ENCODE measurements at regions of chr13 and their contacts with region 1.

Region 1: GRCh38 chr13:29319451-29319850 is 276.0 kb downstream of the SLC7A1 start:
- DNase-seq: no peak
- ATAC-seq: no peak
- H3K4me3 ChIP-seq: no peak overlapping the region
- H3K27ac ChIP-seq: no peak overlapping the region
- H3K4me1 ChIP-seq: no peaks in the 10 kb centered on the region
- H3K27me3 ChIP-seq: no peaks in the 10 kb centered on the region; the same call in 1 of the 2 replicates
- CTCF ChIP-seq: no peak

Region 2: GRCh38 chr13:28967029-28967915 is 352.2 kb before region 1 on chr13:
- CTCF ChIA-PET with region 1: no interaction called
- POLR2A ChIA-PET with region 1: no interaction called
- in situ Hi-C with region 1: no loop called
- intact Hi-C with region 1: no loop called
- DNase-seq: no peak
- ATAC-seq: no peak
- H3K4me3 ChIP-seq: no peak overlapping the region
- H3K27ac ChIP-seq: no peak overlapping the region
- H3K4me1 ChIP-seq: no peaks in the 10 kb centered on the region
- H3K27me3 ChIP-seq: no peaks in the 10 kb centered on the region
- CTCF ChIP-seq: no peak

Region 3: DNA sequence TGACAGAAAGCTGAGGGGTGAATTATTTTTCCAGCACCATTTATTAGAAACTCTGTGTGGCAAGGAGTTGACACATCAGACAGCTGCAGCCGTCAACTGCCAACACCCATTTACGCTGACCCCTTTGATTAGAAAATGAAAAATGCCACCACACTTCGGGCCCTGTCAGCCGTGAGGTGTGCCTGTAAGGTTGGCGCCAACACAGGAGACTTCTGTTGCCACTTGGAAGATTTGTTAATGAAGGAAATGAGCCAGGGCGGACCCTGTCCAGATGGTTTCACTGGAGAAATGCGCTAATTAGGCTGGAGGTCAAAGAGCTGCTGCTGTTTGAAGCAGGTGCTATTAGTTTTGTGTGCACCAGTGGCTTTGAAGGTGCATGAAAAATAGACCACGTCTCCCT is 201.8 kb before region 1 on chr13:
- CTCF ChIA-PET with region 1: no interaction called
- POLR2A ChIA-PET with region 1: no interaction called
- in situ Hi-C with region 1: no loop called
- intact Hi-C with region 1: no loop called
- DNase-seq: no peak
- ATAC-seq: no peak
- H3K4me3 ChIP-seq: no peak overlapping the region
- H3K27ac ChIP-seq: no peak overlapping the region
- H3K4me1 ChIP-seq: no peaks in the 10 kb centered on the region
- H3K27me3 ChIP-seq: no peaks in the 10 kb centered on the region; the same call in 1 of the 2 replicates
- CTCF ChIP-seq: no peak

Region 4: GRCh38 chr13:29693275-29693961 is 374.0 kb after region 1 on chr13:
- CTCF ChIA-PET with region 1: interaction called, 11 read pairs
- POLR2A ChIA-PET with region 1: no interaction called
- in situ Hi-C with region 1: no loop called
- intact Hi-C with region 1: no loop called
- DNase-seq: no peak
- ATAC-seq: no peak
- H3K4me3 ChIP-seq: no peak overlapping the region
- H3K27ac ChIP-seq: no peak overlapping the region
- H3K4me1 ChIP-seq: no peaks in the 10 kb centered on the region
- H3K27me3 ChIP-seq: 0 out of 2 replicates have a peak, but pooled peaks cover 2% of the 10 kb centered on the region
- CTCF ChIP-seq: no peak